GM12878 (cell line): ENCODE measurements at regions of chr20 and their contacts with region 1.

Region 1: DNA sequence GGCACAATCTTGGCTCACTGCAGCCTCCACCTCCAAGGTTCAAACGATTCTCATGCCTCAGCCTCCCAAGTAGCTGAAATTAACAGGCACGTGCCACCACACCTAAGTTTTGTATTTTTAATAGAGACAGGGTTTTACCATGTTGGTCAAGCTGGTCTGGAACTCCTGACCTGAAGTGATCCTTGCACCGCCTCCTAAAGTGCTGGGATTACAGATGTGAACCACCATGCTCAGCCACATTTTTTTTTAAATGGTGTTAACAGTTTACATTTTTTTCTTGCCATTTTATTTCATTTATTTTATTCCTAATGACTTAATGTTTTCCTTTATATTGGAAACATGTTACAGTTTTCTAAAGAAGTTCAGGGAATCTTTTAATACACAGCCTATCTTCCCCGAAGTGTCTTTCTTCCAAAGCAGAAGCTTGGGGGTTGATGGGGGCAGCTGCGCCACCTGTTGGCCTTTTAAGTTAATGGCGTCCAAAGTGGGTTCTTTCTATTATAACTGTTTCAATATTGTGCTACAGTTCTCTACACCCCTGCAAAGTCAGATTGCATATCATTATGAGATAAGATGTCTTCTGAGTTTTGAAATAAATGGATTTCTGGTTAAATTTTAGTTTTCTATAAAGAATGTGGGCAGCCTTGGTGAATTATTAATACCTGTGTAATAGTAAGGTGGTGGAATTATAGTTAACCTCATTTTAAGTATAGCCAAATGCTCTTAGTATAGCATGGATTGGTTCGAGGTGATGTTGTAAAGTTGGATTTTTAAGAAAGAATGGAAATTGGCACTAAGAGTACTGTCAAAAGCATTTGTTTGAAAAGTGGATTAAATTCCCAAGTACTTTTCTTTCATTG is 42.0 kb upstream of the PLCG1 start:
- DNase-seq: no peak
- ATAC-seq: peak; percentile 88
- H3K4me3 ChIP-seq: no peak overlapping the region
- H3K27ac ChIP-seq: no peak overlapping the region
- H3K4me1 ChIP-seq: no peaks in the 10 kb centered on the region
- H3K27me3 ChIP-seq: no peaks in the 10 kb centered on the region
- CTCF ChIP-seq: peak; percentile 74 to 85 (median 84)
- EP300 ChIP-seq: no peak
- POLR2A ChIP-seq: no peak
- RAD21 ChIP-seq: peak; percentile 85

Region 2: GRCh38 chr20:40741507-40742106 is 353.7 kb before region 1 on chr20:
- CTCF ChIA-PET with region 1: no interaction called
- POLR2A ChIA-PET with region 1: no interaction called
- RAD21 ChIA-PET with region 1: no interaction called
- SMC1A ChIA-PET with region 1: no interaction called
- in situ Hi-C with region 1: loop called (anchors 25 kb)
- intact Hi-C with region 1: no loop called
- DNase-seq: no peak
- ATAC-seq: peak; percentile 82
- H3K4me3 ChIP-seq: no peak overlapping the region
- H3K27ac ChIP-seq: no peak overlapping the region
- H3K4me1 ChIP-seq: no peaks in the 10 kb centered on the region
- H3K27me3 ChIP-seq: peaks cover 3 to 6% of the 10 kb centered on the region in 2 experiments; a peak in 2 of 4 replicates
- CTCF ChIP-seq: peak; percentile 59 to 79 (median 74)
- EP300 ChIP-seq: no peak
- POLR2A ChIP-seq: no peak
- RAD21 ChIP-seq: peak; percentile 51

Region 3: DNA sequence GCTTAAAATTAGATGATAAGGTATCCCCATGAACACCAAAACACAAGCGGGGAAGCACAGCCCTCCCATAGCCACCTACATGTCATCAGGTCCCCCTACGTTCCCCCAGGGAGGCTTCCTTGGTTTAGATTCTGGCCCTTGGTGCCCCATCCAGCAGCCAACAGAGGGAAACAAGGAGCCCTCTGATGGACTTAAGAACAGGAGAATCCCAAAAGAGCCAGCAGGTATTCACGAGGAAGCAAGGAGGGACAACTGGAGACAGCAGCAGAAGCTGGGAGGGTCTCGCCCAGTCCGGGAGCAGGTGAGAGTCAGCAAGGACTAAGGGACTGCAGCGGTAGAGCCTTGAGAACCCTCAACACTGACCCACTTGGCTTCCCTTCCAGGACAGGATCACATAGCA is 125.1 kb before region 1 on chr20:
- CTCF ChIA-PET with region 1: interaction called, 127 read pairs
- POLR2A ChIA-PET with region 1: interaction called, 3 read pairs
- RAD21 ChIA-PET with region 1: interaction called, 34 read pairs
- SMC1A ChIA-PET with region 1: interaction called, 50 read pairs
- in situ Hi-C with region 1: loop called (anchors 5 kb)
- intact Hi-C with region 1: loop called (anchors 1 kb)
- DNase-seq: no peak
- ATAC-seq: no peak
- H3K4me3 ChIP-seq: no peak overlapping the region
- H3K27ac ChIP-seq: no peak overlapping the region
- H3K4me1 ChIP-seq: no peaks in the 10 kb centered on the region
- H3K27me3 ChIP-seq: no peaks in the 10 kb centered on the region
- CTCF ChIP-seq: no peak
- EP300 ChIP-seq: no peak
- POLR2A ChIP-seq: no peak
- RAD21 ChIP-seq: no peak

Region 4: GRCh38 chr20:41011551-41012067 is 83.7 kb before region 1 on chr20:
- CTCF ChIA-PET with region 1: interaction called, 10 read pairs
- POLR2A ChIA-PET with region 1: no interaction called
- RAD21 ChIA-PET with region 1: interaction called, 8 read pairs
- SMC1A ChIA-PET with region 1: interaction called, 14 read pairs
- in situ Hi-C with region 1: no loop called
- intact Hi-C with region 1: no loop called
- DNase-seq: peak; percentile 95
- ATAC-seq: peak; percentile 95
- H3K4me3 ChIP-seq: peak overlapping the region; percentile 38
- H3K27ac ChIP-seq: peak overlapping the region; percentile 91
- H3K4me1 ChIP-seq: peaks cover 44% of the 10 kb centered on the region
- H3K27me3 ChIP-seq: no peaks in the 10 kb centered on the region
- CTCF ChIP-seq: no peak
- EP300 ChIP-seq: peak; percentile 83 to 88
- POLR2A ChIP-seq: no peak
- RAD21 ChIP-seq: peak; percentile 30; the same call in 1 of the 2 replicates

Region 5: DNA sequence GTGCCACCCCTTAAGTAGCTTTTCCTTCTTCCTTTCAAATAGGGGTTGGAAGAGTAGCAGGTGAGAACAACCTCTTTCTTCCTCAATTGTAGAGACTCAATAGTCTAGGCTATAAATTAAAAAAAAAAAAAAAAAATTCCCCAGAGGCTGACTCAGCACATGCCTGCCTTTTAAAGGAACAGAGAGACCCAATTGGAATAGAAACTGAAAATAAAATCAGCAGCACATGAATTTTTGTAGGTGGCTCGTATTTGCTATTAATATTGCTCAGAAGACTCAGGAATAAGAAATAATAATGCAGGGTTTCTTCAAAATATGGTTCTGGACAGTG is 47.4 kb before region 1 on chr20:
- CTCF ChIA-PET with region 1: interaction called, 17 read pairs
- POLR2A ChIA-PET with region 1: no interaction called
- RAD21 ChIA-PET with region 1: interaction called, 6 read pairs
- SMC1A ChIA-PET with region 1: interaction called, 9 read pairs
- in situ Hi-C with region 1: no loop called
- intact Hi-C with region 1: no loop called
- DNase-seq: no peak
- ATAC-seq: peak; percentile 69
- H3K4me3 ChIP-seq: peak overlapping the region; percentile 64
- H3K27ac ChIP-seq: peak overlapping the region; percentile 76
- H3K4me1 ChIP-seq: peaks cover 44% of the 10 kb centered on the region
- H3K27me3 ChIP-seq: no peaks in the 10 kb centered on the region
- CTCF ChIP-seq: no peak
- EP300 ChIP-seq: no peak
- POLR2A ChIP-seq: no peak
- RAD21 ChIP-seq: no peak

Region 6: GRCh38 chr20:41072190-41072863 is 23.0 kb before region 1 on chr20:
- CTCF ChIA-PET with region 1: interaction called, 25 read pairs
- POLR2A ChIA-PET with region 1: no interaction called
- RAD21 ChIA-PET with region 1: interaction called, 7 read pairs
- SMC1A ChIA-PET with region 1: interaction called, 9 read pairs
- in situ Hi-C with region 1: no loop called
- intact Hi-C with region 1: no loop called
- DNase-seq: no peak
- ATAC-seq: peak; percentile 18; the same call in 2 of the 3 replicates
- H3K4me3 ChIP-seq: no peak overlapping the region
- H3K27ac ChIP-seq: peak overlapping the region; percentile 9; the same call in 1 of the 2 replicates
- H3K4me1 ChIP-seq: peaks cover 15% of the 10 kb centered on the region
- H3K27me3 ChIP-seq: no peaks in the 10 kb centered on the region
- CTCF ChIP-seq: no peak
- EP300 ChIP-seq: no peak
- POLR2A ChIP-seq: no peak
- RAD21 ChIP-seq: no peak

Region 7: DNA sequence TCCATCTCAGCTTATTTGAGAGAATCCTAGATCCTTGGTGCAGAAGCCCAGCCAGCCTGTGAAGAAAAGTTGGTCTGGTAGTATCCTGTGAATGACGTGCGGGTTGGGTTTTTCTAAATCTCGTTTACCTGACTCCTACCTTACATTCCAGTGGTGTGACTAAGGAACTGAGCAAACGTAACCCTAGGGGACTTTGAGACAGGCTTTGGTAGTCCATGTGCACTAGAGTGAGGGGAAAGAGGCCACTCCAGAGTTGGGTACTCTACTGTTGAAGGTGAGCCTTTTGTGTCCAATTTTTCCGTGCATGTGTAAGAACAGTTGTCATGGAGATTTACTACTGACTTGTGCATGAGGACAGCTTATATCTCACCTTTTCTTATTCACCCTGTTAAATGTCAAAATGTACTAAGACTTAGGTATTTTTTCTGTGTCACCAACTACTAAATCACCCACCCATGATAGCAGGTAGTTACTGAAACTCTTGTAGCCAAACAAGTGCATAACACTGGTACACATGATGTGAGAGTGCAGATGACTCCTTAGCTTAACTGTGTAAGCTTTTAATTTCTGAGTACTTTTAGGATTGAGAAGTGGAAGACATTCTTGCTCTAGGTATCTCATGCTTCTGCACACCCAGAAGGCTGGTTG is 15.7 kb after region 1 on chr20:
- CTCF ChIA-PET with region 1: interaction called, 12 read pairs
- POLR2A ChIA-PET with region 1: no interaction called
- RAD21 ChIA-PET with region 1: interaction called, 3 read pairs
- SMC1A ChIA-PET with region 1: interaction called, 11 read pairs
- in situ Hi-C with region 1: no loop called
- intact Hi-C with region 1: no loop called
- DNase-seq: no peak
- ATAC-seq: peak; percentile 83
- H3K4me3 ChIP-seq: no peak overlapping the region
- H3K27ac ChIP-seq: no peak overlapping the region
- H3K4me1 ChIP-seq: peaks cover 5% of the 10 kb centered on the region; the same call in 1 of the 2 replicates
- H3K27me3 ChIP-seq: no peaks in the 10 kb centered on the region
- CTCF ChIP-seq: no peak
- EP300 ChIP-seq: no peak
- POLR2A ChIP-seq: no peak; the same call in 1 of the 2 replicates
- RAD21 ChIP-seq: no peak

Region 8: GRCh38 chr20:41205313-41205712 is 110.0 kb after region 1 on chr20:
- CTCF ChIA-PET with region 1: no interaction called
- POLR2A ChIA-PET with region 1: no interaction called
- RAD21 ChIA-PET with region 1: no interaction called
- SMC1A ChIA-PET with region 1: no interaction called
- in situ Hi-C with region 1: no loop called
- intact Hi-C with region 1: no loop called
- DNase-seq: no peak
- ATAC-seq: no peak
- H3K4me3 ChIP-seq: no peak overlapping the region
- H3K27ac ChIP-seq: no peak overlapping the region
- H3K4me1 ChIP-seq: no peaks in the 10 kb centered on the region
- H3K27me3 ChIP-seq: no peaks in the 10 kb centered on the region
- CTCF ChIP-seq: no peak
- EP300 ChIP-seq: no peak
- POLR2A ChIP-seq: no peak
- RAD21 ChIP-seq: no peak